ENCODE measurements at regions of chr11 and their contacts with region 1.

Region 1: DNA sequence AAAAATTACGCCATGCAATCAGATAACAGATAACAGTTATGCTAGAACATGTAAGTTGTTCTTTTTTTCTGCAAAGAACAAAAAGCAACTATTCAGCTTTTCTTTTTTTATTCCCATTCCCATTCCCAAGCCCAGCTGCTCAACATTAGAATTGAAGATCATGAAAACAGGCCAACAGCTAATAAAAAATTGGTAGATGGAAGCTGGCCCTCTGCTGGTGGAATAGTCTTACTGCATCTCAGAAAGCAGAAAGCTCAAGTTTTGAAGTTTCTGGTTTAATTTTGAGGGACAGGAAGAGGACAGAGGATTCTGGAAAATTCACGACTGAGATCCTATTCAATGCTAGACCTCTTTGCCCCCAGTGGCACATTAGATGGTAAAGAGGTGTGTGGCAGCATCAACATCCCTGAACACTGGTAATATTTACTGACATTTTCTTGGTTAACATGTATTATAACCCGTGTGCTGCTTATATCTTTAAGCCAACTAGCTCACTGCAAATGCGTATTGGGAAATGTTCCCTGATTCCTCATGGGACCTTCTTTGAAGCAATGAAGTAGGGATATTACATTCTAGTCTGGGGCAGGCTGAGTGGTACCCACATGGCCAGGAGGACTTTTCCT is 591.2 kb downstream of the OPCML start:
- DNase-seq: peak in 2 of 5 donors; percentile 3 to 4
- H3K4me3 ChIP-seq: no peak overlapping the region
- H3K4me3 Mint-ChIP-seq: no peak overlapping the region
- H3K27ac ChIP-seq: no peak overlapping the region
- H3K27ac Mint-ChIP-seq: no peak overlapping the region
- H3K4me1 ChIP-seq: no peaks in the 10 kb centered on the region
- H3K4me1 Mint-ChIP-seq: peaks cover 0 to 4% (median 3%) of the 10 kb centered on the region in 4 donors
- H3K27me3 ChIP-seq: no peaks in the 10 kb centered on the region
- H3K27me3 Mint-ChIP-seq: peaks cover 20% of the 10 kb centered on the region in 2 donors

Region 2: DNA sequence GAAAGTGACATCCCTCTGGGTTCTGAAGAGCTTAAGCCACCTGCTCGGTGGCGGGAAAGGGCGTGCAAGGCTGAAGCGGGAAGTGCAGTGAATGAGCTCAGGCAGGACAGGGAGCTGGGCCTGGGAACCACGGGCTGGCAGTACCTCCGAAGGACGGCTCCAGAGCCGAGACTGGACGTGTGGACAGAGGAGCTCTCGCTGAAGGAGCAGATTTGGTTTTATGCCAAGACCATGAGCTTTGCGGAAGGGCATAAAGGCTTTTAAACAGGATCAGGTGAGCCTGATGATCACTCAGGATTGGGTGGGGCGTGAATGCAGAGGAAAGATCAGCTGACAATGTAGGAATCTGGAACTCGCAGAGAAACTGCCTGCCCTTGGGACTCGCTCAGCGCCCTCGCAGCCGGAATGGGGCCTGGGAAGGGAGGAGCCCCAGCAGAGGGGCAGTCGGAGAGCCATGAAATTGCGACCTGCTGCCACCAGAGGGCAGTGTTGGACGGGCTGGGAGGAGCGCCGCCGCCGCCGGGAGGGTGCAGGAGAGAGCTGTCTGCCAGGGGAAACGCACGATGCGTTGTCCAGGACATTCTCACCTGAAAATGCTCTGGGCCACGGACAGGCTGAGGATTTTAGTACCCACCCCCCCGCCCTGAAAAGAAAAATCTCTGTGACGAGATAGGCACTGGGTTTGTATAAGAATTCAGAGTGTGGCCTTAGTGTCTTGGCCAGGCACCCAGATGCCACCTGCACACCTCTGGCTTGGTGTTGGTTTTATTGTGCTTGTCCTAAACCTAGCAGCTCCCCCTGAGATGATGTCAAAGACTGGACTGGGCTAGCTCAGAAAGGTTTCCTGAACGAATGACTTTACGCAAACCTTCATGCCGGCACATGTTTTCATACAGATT is 1246.4 kb before region 1 on chr11:
- CTCF ChIA-PET with region 1: interaction called, 3 read pairs
- POLR2A ChIA-PET with region 1: no interaction called
- intact Hi-C with region 1: loop called (anchors 5 kb)
- DNase-seq: peak in 4 of 5 donors; percentile 24 to 33 (median 32)
- H3K4me3 ChIP-seq: no peak overlapping the region
- H3K4me3 Mint-ChIP-seq: peak overlapping the region in 1 of 8 donors; percentile 53
- H3K27ac ChIP-seq: no peak overlapping the region
- H3K27ac Mint-ChIP-seq: no peak overlapping the region
- H3K4me1 ChIP-seq: no peaks in the 10 kb centered on the region
- H3K4me1 Mint-ChIP-seq: peaks cover 6 to 12% (median 8%) of the 10 kb centered on the region in 4 donors
- H3K27me3 ChIP-seq: no peaks in the 10 kb centered on the region
- H3K27me3 Mint-ChIP-seq: peaks cover 19 to 28% of the 10 kb centered on the region in 2 donors

Region 3: DNA sequence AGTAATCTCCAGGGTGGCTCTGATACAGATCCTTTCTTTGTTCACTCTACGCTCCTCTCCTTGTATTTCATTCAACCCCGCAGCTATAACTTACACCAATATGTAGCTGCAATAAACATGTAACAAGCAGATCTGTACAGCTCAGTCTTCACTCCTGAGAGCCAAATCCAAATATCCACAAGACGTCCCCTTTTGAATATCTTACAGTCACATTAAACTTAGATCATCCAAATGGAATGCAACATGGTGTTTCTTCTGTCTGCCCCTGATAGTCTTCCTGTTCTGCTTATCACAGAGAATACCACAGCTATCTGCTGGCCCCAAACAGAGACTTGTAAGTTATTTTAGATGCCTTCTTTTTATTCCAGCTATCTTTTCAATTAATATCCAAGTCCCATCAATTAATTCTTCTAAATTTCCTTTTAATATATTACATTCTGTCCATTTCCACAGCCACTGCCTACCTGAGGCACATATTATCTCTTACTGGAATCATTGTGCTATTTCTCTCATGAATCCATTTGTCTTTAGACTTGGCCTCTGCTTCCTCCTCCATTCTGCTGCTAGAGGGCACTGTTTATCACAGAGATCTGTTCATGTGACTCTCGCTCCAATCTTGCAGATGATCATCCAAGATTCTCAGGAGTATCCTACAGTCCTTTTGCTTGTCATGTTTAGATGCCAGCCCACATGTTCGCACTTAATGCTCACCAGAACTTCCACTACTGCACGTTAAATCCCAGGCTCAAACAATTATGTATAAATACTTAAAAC is 662.1 kb before region 1 on chr11:
- CTCF ChIA-PET with region 1: interaction called, 21 read pairs
- POLR2A ChIA-PET with region 1: no interaction called
- intact Hi-C with region 1: loop called (anchors 2 kb)
- DNase-seq: no peak
- H3K4me3 ChIP-seq: no peak overlapping the region
- H3K4me3 Mint-ChIP-seq: no peak overlapping the region
- H3K27ac ChIP-seq: no peak overlapping the region
- H3K27ac Mint-ChIP-seq: no peak overlapping the region
- H3K4me1 ChIP-seq: no peaks in the 10 kb centered on the region
- H3K4me1 Mint-ChIP-seq: no peaks in the 10 kb centered on the region
- H3K27me3 ChIP-seq: no peaks in the 10 kb centered on the region
- H3K27me3 Mint-ChIP-seq: no peaks in the 10 kb centered on the region

Region 4: GRCh38 chr11:132770829-132771515 is 170.2 kb before region 1 on chr11:
- CTCF ChIA-PET with region 1: no interaction called
- POLR2A ChIA-PET with region 1: no interaction called
- intact Hi-C with region 1: no loop called
- DNase-seq: no peak
- H3K4me3 ChIP-seq: no peak overlapping the region
- H3K4me3 Mint-ChIP-seq: no peak overlapping the region
- H3K27ac ChIP-seq: no peak overlapping the region
- H3K27ac Mint-ChIP-seq: no peak overlapping the region
- H3K4me1 ChIP-seq: no peaks in the 10 kb centered on the region
- H3K4me1 Mint-ChIP-seq: peaks cover 0 to 5% (median 0%) of the 10 kb centered on the region in 4 donors
- H3K27me3 ChIP-seq: no peaks in the 10 kb centered on the region
- H3K27me3 Mint-ChIP-seq: peaks cover 4 to 5% of the 10 kb centered on the region in 2 donors

Region 5: GRCh38 chr11:132866783-132867545 is 74.2 kb before region 1 on chr11:
- CTCF ChIA-PET with region 1: no interaction called
- POLR2A ChIA-PET with region 1: no interaction called
- intact Hi-C with region 1: no loop called
- DNase-seq: no peak
- H3K4me3 ChIP-seq: no peak overlapping the region
- H3K4me3 Mint-ChIP-seq: no peak overlapping the region
- H3K27ac ChIP-seq: no peak overlapping the region
- H3K27ac Mint-ChIP-seq: no peak overlapping the region
- H3K4me1 ChIP-seq: no peaks in the 10 kb centered on the region
- H3K4me1 Mint-ChIP-seq: no peaks in the 10 kb centered on the region
- H3K27me3 ChIP-seq: no peaks in the 10 kb centered on the region
- H3K27me3 Mint-ChIP-seq: peaks cover 0 to 1% of the 10 kb centered on the region in 2 donors

Region 6: DNA sequence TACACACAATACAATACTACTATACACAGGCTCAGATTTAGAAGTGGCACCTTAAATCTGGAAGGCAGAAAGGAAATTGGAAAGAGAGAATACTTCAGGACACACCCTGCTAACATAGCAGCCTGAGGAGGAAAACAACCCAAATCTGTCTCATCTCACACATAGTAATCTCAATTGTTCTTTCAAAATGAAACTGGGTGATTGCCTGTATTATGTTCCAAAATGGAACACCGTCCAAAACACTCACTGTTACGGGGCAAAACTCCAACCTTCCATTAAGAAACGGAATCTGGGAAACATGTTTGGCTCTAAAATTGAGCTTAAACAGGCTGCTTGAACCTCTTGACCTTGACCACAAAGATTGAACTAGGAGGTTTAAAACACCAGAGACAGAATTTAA is 18.6 kb after region 1 on chr11:
- CTCF ChIA-PET with region 1: interaction called, 13 read pairs
- POLR2A ChIA-PET with region 1: no interaction called
- intact Hi-C with region 1: no loop called
- DNase-seq: no peak
- H3K4me3 ChIP-seq: no peak overlapping the region
- H3K4me3 Mint-ChIP-seq: no peak overlapping the region
- H3K27ac ChIP-seq: no peak overlapping the region
- H3K27ac Mint-ChIP-seq: no peak overlapping the region
- H3K4me1 ChIP-seq: no peaks in the 10 kb centered on the region
- H3K4me1 Mint-ChIP-seq: peaks cover 0 to 3% (median 0%) of the 10 kb centered on the region in 4 donors
- H3K27me3 ChIP-seq: peaks cover 4% of the 10 kb centered on the region
- H3K27me3 Mint-ChIP-seq: peaks cover 0 to 2% of the 10 kb centered on the region in 2 donors

Region 7: DNA sequence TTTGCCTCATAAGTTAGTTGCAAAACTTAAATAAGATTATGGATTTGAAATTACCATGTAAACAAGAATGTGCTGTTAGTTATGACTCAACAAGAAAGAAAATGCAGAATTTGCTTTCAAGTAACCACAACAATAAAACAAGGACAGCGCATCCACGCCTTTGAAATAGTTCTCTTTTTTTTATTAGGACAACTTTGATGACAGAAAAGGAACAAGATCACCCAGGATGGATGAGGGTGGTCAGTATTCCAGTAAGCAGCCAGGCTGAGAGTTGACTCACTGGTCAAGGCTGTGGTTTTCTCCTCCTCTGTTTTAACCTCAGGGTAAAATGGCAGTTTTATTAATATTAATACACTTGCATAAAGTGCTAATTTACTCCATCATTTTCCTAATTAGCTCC is 46.8 kb after region 1 on chr11:
- CTCF ChIA-PET with region 1: no interaction called
- POLR2A ChIA-PET with region 1: no interaction called
- intact Hi-C with region 1: no loop called
- DNase-seq: no peak
- H3K4me3 ChIP-seq: no peak overlapping the region
- H3K4me3 Mint-ChIP-seq: no peak overlapping the region
- H3K27ac ChIP-seq: no peak overlapping the region
- H3K27ac Mint-ChIP-seq: no peak overlapping the region
- H3K4me1 ChIP-seq: no peaks in the 10 kb centered on the region
- H3K4me1 Mint-ChIP-seq: no peaks in the 10 kb centered on the region
- H3K27me3 ChIP-seq: no peaks in the 10 kb centered on the region
- H3K27me3 Mint-ChIP-seq: peaks cover 0 to 6% of the 10 kb centered on the region in 2 donors